ENCODE measurements at regions of chr17 and their contacts with region 1.

Region 1: DNA sequence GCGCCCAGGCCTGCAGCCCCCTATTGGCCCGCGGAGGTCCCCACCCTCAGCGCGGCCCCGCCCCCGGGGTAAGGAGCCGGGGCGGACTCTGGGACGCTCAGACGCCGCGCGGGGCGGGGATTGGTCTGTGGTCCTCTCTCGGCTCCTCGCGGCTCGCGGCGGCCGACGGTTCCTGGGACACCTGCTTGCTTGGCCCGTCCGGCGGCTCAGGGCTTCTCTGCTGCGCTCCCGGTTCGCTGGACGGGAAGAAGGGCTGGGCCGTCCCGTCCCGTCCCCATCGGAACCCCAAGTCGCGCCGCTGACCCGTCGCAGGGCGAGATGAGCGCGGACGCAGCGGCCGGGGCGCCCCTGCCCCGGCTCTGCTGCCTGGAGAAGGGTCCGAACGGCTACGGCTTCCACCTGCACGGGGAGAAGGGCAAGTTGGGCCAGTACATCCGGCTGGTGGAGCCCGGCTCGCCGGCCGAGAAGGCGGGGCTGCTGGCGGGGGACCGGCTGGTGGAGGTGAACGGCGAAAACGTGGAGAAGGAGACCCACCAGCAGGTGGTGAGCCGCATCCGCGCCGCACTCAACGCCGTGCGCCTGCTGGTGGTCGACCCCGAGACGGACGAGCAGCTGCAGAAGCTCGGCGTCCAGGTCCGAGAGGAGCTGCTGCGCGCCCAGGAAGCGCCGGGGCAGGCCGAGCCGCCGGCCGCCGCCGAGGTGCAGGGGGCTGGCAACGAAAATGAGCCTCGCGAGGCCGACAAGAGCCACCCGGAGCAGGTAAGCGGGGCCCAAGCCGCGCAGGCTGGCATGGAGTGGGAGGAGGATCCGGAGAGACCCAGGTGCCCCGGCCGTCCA is at the start of gene NHERF1:
- DNase-seq: peak; percentile 95
- H3K4me3 ChIP-seq: peak within 1 kb of the TSS; percentile 80
- H3K27ac ChIP-seq: peak within 1 kb of the TSS; percentile 52
- H3K4me1 ChIP-seq: peaks cover 11% of the 10 kb centered on the region
- H3K27me3 ChIP-seq: no peaks in the 10 kb centered on the region
- CTCF ChIP-seq: no peak; the same call in 1 of the 2 replicates
- total RNA-seq, gene NHERF1: 33.8 and 47.9 TPM in 2 replicates

Region 2: DNA sequence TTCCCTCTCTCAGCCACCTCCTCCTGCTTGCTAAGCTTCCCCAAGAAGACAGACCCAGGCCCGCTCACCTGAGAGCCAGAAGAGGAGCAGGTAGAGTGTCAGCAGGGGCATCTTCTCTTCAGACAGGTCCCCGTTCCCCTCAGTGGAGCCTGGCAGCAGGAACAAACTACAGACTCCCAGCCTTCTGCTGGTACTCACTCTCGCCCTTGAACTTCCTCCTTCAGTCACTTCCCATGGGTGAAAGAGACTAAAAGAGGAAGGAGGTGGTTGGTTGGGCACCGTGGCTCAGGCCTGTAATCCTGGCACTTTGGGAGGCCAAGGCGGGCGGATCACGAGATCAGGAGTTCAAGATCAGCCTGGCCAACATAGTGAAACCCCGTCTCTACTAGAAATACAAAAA is 36.0 kb before region 1 on chr17 and contains the start of gene CD300LF:
- CTCF ChIA-PET with region 1: interaction called, 10 read pairs
- POLR2A ChIA-PET with region 1: no interaction called
- intact Hi-C with region 1: no loop called
- DNase-seq: no peak
- H3K4me3 ChIP-seq: no peak within 1 kb of the TSS
- H3K27ac ChIP-seq: no peak within 1 kb of the TSS
- H3K4me1 ChIP-seq: no peaks in the 10 kb centered on the region
- H3K27me3 ChIP-seq: peaks cover 51% of the 10 kb centered on the region
- CTCF ChIP-seq: no peak
- total RNA-seq, gene CD300LF: not detected in 2 replicates

Region 3: GRCh38 chr17:74776044-74776977 is 27.6 kb after region 1 on chr17 and contains the start of gene NAT9:
- CTCF ChIA-PET with region 1: interaction called, 3 read pairs
- POLR2A ChIA-PET with region 1: no interaction called
- intact Hi-C with region 1: loop called (anchors 5 kb)
- DNase-seq: peak; percentile 98
- H3K4me3 ChIP-seq: peak within 1 kb of the TSS; percentile 92
- H3K27ac ChIP-seq: peak within 1 kb of the TSS; percentile 90
- H3K4me1 ChIP-seq: no peaks in the 10 kb centered on the region
- H3K27me3 ChIP-seq: no peaks in the 10 kb centered on the region
- CTCF ChIP-seq: no peak
- total RNA-seq, gene NAT9: 55.6 and 60.6 TPM in 2 replicates

Region 4: GRCh38 chr17:75412455-75413317 is 663.9 kb after region 1 on chr17:
- CTCF ChIA-PET with region 1: no interaction called
- POLR2A ChIA-PET with region 1: no interaction called
- intact Hi-C with region 1: loop called (anchors 5 kb)
- DNase-seq: peak; percentile 84
- H3K4me3 ChIP-seq: no peak overlapping the region
- H3K27ac ChIP-seq: no peak overlapping the region
- H3K4me1 ChIP-seq: no peaks in the 10 kb centered on the region
- H3K27me3 ChIP-seq: no peaks in the 10 kb centered on the region
- CTCF ChIP-seq: peak; percentile 83

Measured in A673 (cell line).